CD14-positive monocyte (primary cell): ENCODE measurements at regions of chr22 and their contacts with region 1.

Region 1: DNA sequence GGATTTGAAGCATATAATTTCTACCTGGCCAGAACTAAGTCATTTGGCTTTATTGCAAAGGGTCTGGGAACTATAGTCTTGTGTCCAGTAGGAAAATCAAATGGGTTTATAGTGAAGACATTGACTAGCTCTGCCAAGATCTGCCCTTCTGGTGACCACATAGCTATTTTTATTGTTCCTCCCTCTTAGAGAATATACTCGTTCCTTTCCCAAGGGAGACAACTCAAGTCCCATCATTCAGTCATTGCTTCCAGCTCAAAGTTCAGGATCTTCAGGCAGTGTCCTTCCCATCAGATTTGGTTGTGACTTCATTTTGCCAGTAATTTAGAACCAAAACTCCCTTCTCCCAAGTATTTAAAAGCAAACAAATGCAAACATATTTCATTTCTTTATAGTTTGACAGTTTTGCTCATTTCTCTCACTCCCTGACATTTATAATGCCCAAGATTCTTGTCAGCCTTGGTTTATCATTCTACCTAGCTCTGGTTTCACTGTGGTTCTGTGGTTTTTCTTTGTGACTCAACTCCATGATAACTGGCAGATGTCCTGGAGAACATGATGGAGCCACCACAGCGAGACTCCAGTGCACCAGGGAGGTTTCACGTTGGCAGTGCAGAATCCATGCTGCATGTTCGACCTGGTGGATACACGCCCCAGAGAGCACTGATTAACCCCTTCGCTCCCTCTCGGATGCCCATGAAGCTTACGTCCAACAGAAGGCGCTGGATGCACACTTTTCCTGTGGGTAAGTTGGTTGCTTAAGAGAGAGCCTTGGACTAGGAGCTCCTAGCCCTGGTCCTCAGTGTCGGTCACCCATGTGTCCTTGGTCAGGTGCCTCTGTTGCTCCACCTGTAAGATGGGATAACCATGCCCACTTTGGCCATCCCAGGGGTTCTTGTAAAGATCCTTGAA is 64.9 kb downstream of the DEPDC5 start:
- DNase-seq: no peak
- H3K4me3 ChIP-seq: no peak overlapping the region
- H3K4me3 Mint-ChIP-seq: no peak overlapping the region
- H3K27ac ChIP-seq: no peak overlapping the region
- H3K27ac Mint-ChIP-seq: no peak overlapping the region
- H3K4me1 ChIP-seq: no peaks in the 10 kb centered on the region
- H3K4me1 Mint-ChIP-seq: no peaks in the 10 kb centered on the region
- H3K27me3 ChIP-seq: no peaks in the 10 kb centered on the region
- H3K27me3 Mint-ChIP-seq: peaks cover 0 to 2% (median 0%) of the 10 kb centered on the region in 3 donors
- CTCF ChIP-seq: no peak

Region 2: GRCh38 chr22:31768422-31769059 is 50.2 kb before region 1 on chr22:
- intact Hi-C with region 1: loop called in 1 of 2 experiments (anchors 10 kb)
- DNase-seq: no peak
- H3K4me3 ChIP-seq: no peak overlapping the region
- H3K4me3 Mint-ChIP-seq: no peak overlapping the region
- H3K27ac ChIP-seq: no peak overlapping the region
- H3K27ac Mint-ChIP-seq: no peak overlapping the region
- H3K4me1 ChIP-seq: no peaks in the 10 kb centered on the region
- H3K4me1 Mint-ChIP-seq: no peaks in the 10 kb centered on the region
- H3K27me3 ChIP-seq: no peaks in the 10 kb centered on the region
- H3K27me3 Mint-ChIP-seq: peaks cover 0 to 1% (median 0%) of the 10 kb centered on the region in 3 donors
- CTCF ChIP-seq: no peak

Region 3: GRCh38 chr22:31846161-31847115 is 27.7 kb after region 1 on chr22:
- intact Hi-C with region 1: no loop called
- DNase-seq: no peak
- H3K4me3 ChIP-seq: no peak overlapping the region
- H3K4me3 Mint-ChIP-seq: no peak overlapping the region
- H3K27ac ChIP-seq: peak overlapping the region in 1 of 2 donors; percentile 46
- H3K27ac Mint-ChIP-seq: peak overlapping the region in 4 of 7 donors; percentile 37 to 77 (median 50)
- H3K4me1 ChIP-seq: peaks cover 0 to 3% of the 10 kb centered on the region in 2 donors
- H3K4me1 Mint-ChIP-seq: peaks cover 7% of the 10 kb centered on the region
- H3K27me3 ChIP-seq: no peaks in the 10 kb centered on the region
- H3K27me3 Mint-ChIP-seq: no peaks in the 10 kb centered on the region
- CTCF ChIP-seq: peak; percentile 46